ENCODE measurements at regions of chr1 and their contacts with region 1.

Region 1: GRCh38 chr1:175742790-175743459 is 470 bp downstream of the TNR start:
- DNase-seq: peak in 2 of 7 donors; percentile 2 to 9
- H3K4me3 ChIP-seq: no peak overlapping the region
- H3K27ac ChIP-seq: no peak overlapping the region
- H3K4me1 ChIP-seq: no peaks in the 10 kb centered on the region
- H3K27me3 ChIP-seq: no peaks in the 10 kb centered on the region
- CTCF ChIP-seq: no peak
- POLR2A ChIP-seq: no peak

Region 2: GRCh38 chr1:175481126-175482066 is 261.5 kb before region 1 on chr1:
- intact Hi-C with region 1: loop called in 1 of 2 experiments (anchors 10 kb)
- DNase-seq: no peak
- H3K4me3 ChIP-seq: no peak overlapping the region
- H3K27ac ChIP-seq: no peak overlapping the region
- H3K4me1 ChIP-seq: no peaks in the 10 kb centered on the region
- H3K27me3 ChIP-seq: no peaks in the 10 kb centered on the region
- CTCF ChIP-seq: peak; percentile 33 to 66 (median 55)
- POLR2A ChIP-seq: no peak

Region 3: DNA sequence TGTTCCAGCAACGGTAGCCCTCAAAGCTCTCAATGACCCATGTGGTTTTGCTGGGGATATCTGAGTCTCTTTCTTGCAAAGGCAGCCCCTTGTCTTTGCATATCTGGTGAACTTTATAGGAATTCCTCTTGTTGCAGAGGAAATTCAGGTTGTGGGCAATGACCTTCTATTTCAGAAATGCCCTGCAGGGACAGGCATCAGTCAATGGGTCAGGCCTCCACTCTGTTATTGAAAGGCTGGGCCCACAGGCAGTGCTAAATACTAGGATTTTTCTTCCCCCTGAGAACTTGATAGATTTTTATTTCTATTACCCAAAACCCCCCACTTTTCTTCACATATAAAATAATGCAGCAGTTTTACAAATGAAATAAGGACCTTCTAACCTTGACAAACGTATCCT is 130.6 kb before region 1 on chr1:
- intact Hi-C with region 1: loop called in 1 of 2 experiments (anchors 5 kb)
- DNase-seq: no peak
- H3K4me3 ChIP-seq: no peak overlapping the region
- H3K27ac ChIP-seq: no peak overlapping the region
- H3K4me1 ChIP-seq: no peaks in the 10 kb centered on the region
- H3K27me3 ChIP-seq: no peaks in the 10 kb centered on the region
- CTCF ChIP-seq: no peak
- POLR2A ChIP-seq: no peak

Region 4: GRCh38 chr1:176022574-176022973 is 279.6 kb after region 1 on chr1:
- intact Hi-C with region 1: no loop called
- DNase-seq: no peak
- H3K4me3 ChIP-seq: no peak overlapping the region
- H3K27ac ChIP-seq: no peak overlapping the region
- H3K4me1 ChIP-seq: peaks cover 0 to 3% of the 10 kb centered on the region in 2 donors
- H3K27me3 ChIP-seq: no peaks in the 10 kb centered on the region
- CTCF ChIP-seq: no peak
- POLR2A ChIP-seq: no peak